ENCODE measurements at regions of chr22 and their contacts with region 1.

Region 1: DNA sequence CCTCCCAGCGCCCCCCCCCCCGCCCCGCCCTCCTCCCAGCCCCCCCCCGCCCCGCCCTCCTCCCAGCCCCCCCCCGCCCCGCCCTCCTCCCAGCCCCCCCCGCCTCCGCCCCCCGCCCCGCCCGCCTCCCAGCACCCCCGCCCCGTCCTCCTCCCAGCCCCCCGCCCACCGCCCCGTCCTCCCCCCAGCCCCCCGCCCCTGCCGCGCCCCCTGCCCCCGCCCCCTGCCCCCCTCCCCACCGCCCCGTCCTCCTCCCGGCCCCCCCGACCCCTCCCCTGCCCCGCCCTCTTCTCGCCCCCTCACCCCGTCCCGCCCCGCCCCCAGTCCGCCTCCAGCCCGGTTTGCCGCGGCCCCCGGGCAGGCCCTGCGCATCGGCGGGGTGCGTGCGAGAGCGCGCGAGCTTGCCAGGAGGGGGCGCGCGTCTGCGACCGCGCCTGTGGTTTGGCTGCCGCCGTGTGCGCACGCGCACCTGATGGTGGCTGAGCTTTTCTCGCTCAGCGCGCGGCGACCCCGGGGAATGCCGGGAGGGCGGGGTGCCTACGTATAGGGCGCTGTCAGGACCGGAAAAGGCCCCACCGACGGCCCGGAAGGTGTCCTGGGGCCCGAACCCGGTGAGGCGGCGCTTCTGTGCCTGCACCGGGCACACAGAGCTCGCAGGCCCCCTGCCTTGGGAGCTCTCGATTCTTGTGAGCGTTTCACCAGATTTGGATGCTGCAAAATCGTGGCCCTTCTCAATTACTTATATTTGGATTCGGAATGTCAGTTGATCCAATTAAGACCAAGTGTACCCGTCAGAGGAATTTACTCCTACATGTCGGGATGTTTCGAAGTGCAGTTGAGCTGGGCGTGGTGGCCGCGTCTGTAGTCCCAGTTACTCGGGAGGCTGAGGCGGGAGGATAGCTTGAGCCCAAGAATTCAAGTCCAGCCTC is 501 bp upstream of the TTLL12 start:
- DNase-seq: peak; percentile 93 to 98 (median 95)
- ATAC-seq: peak; percentile 89 to 92
- H3K4me3 Mint-ChIP-seq: peak overlapping the region; percentile 74 to 87 (median 83)
- H3K27ac Mint-ChIP-seq: peak overlapping the region; percentile 94 to 99 (median 98)
- H3K4me1 Mint-ChIP-seq: peaks cover 13 to 30% (median 20%) of the 10 kb centered on the region in 4 donors
- H3K27me3 Mint-ChIP-seq: peaks cover 0 to 2% (median 0%) of the 10 kb centered on the region in 5 donors

Region 2: GRCh38 chr22:43142880-43143562 is 44.4 kb before region 1 on chr22 and contains the start of gene MCAT:
- POLR2A ChIA-PET with region 1: interaction called, 17 read pairs
- DNase-seq: peak; percentile 62 to 89 (median 80)
- ATAC-seq: peak; percentile 84 to 90
- H3K4me3 Mint-ChIP-seq: peak within 1 kb of the TSS; percentile 81 to 90 (median 86)
- H3K27ac Mint-ChIP-seq: peak within 1 kb of the TSS; percentile 87 to 97 (median 95)
- H3K4me1 Mint-ChIP-seq: peaks cover 14 to 46% (median 27%) of the 10 kb centered on the region in 4 donors
- H3K27me3 Mint-ChIP-seq: no peaks in the 10 kb centered on the region
- polyA plus RNA-seq, gene MCAT: 10.8 to 11.3 (median 10.8) TPM

Region 3: DNA sequence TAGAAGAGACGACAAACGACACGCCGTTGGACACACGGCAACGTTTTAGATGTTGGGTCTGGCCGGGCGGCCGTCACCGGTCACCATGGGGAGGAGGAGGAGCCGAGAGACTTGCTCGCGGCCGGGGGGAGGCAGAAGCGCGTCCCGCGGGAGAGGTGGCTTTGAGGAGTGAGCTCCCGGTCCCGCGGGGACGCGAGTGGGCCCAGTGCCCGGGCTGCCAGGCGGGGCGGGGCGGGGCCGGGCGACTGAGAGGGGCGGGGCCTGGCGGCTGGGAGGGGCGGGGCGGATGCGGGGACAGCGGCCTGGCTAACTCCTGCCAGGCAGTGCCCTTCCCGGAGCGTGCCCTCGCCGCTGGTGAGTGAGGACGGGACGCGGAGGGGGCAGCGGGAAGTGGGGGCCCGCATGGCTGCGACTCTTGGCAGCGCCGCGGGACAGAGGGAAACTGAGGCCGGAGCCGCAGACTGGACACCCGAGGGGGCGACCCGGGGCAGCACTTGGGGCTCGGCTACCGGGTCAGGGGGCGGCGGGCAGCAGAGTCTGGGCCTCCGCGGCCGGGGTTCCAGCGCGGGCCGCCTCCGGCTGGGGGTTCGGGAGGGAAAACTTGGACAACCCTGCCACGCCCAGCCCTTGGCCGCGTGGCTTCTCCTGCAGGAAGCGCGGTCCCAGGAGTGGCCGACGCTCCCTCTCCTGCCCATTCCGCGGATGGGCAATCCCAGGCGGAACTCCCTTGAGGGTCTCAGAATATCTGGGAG is 36.0 kb before region 1 on chr22 and contains the start of gene TSPO:
- POLR2A ChIA-PET with region 1: interaction called, 33 read pairs
- DNase-seq: peak; percentile 10 to 75 (median 48)
- ATAC-seq: peak; percentile 21 to 54
- H3K4me3 Mint-ChIP-seq: peak within 1 kb of the TSS; percentile 76 to 94 (median 92)
- H3K27ac Mint-ChIP-seq: peak within 1 kb of the TSS; percentile 87 to 96 (median 92)
- H3K4me1 Mint-ChIP-seq: peaks cover 26 to 44% (median 35%) of the 10 kb centered on the region in 4 donors
- H3K27me3 Mint-ChIP-seq: no peaks in the 10 kb centered on the region
- polyA plus RNA-seq, gene TSPO: 284 to 305 (median 304) TPM

Region 4: DNA sequence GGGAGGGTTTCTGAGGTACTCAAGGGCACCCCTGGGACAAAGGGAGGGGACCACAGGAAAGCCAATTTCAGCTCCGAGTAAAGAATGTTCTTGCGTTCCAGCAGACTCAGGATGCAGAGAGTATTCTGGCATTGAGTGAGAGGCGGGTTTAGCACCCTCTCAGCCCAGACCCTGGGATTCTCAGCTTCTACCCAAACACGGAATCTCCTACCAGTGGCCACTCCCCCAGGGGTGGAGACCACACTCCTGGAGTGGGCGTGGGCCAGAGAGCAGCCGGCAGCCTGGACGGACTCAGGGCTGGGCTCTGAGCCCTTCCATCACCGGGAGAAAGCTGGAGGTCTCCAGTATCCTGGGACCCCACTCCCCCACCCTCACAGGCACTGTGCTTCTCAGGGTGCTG is 25.6 kb after region 1 on chr22:
- POLR2A ChIA-PET with region 1: no interaction called
- DNase-seq: peak in 1 of 10 donors; percentile 34
- ATAC-seq: no peak
- H3K4me3 Mint-ChIP-seq: no peak overlapping the region
- H3K27ac Mint-ChIP-seq: no peak overlapping the region
- H3K4me1 Mint-ChIP-seq: peaks cover 0 to 2% (median 0%) of the 10 kb centered on the region in 4 donors
- H3K27me3 Mint-ChIP-seq: peaks cover 0 to 2% (median 0%) of the 10 kb centered on the region in 5 donors

Measured in naive thymus-derived CD8-positive, alpha-beta T cell (primary cell).